ENCODE measurements at regions of chr2 and their contacts with region 1.

Region 1: DNA sequence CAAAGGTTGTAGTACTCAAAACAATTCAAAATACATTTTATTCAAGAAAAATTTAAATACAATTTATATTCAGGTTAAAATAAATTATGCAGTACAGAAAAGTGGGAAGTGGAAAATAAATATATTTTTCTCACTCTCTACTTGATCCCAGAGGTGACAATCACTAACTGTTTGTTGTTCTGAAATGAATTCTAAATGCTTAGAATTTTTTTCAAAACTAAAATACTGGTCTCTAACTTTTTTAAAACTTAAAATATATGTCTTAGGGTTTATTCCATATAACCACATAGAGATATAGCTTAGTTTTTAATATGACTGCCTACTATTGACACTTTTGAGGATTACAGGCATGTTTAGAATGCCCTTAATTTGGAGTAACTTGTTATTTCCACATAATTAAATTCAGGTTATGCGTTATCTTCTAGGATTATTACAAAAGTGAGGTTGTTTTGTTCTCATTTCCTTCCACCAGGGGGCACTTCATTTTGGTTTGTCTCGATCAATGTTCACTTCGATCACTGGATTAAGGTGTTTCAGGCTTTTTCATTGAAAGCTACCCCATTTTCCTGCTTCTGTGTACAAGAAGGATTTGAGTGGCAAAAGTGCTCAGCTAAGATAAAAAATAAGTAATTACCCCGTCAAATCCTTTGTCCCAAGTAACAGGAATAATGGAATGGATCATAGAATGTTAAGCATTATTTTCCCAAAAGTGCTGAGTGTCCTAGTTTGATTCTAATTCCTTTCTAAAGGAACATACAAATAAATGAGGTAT is 27.1 kb upstream of the TFPI start:
- DNase-seq: no peak
- ATAC-seq: peak; percentile 37 to 50
- H3K4me3 ChIP-seq: peak overlapping the region; percentile 59
- H3K27ac ChIP-seq: no peak overlapping the region
- H3K4me1 ChIP-seq: no peaks in the 10 kb centered on the region
- H3K27me3 ChIP-seq: no peaks in the 10 kb centered on the region

Region 2: GRCh38 chr2:187429989-187430388 is 151.3 kb before region 1 on chr2:
- intact Hi-C with region 1: no loop called
- DNase-seq: no peak
- ATAC-seq: peak in 1 of 2 donors; percentile 85
- H3K4me3 ChIP-seq: no peak overlapping the region
- H3K27ac ChIP-seq: no peak overlapping the region
- H3K4me1 ChIP-seq: no peaks in the 10 kb centered on the region
- H3K27me3 ChIP-seq: no peaks in the 10 kb centered on the region

Region 3: DNA sequence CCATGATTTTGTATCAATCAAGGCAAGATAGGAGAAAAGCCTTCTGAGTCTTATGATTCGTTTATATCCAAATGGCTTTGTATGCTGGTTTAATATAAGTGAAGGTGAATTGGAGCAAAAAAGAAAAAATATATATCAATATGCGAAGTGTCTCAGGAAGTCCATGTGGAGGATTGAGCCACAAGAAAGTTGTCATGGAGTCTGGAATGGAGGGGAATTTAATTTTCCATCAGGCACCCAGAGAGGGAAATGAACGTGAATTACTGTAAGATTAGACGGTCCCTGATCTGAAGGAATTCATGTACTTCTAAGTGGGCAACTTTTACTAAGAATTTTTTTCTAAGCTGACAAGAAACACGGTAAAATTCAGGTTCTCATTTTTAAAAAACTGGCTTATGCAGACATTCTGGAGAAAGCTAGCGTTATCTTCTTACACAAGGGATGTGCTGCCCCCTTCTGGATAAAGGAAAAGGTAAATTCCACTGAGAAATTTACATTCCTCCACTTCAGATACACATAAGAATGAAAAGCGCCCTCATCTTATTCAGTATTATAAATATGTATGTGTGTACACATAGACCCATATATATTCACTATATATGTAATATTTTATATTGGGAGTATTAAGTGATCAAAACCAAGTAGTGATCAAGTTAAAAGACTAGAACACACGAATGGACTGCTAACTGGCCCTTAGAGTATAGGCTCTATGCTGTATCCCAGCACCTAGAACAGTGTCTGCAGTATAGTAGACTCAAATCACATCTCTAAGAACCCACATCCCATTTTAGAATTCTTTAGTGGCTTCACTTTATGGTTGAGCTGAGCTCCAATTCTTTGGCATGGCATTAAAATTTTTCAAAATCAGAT is 261.9 kb after region 1 on chr2:
- intact Hi-C with region 1: loop called in 1 of 4 experiments (anchors 10 kb)
- DNase-seq: no peak
- ATAC-seq: peak in 1 of 2 donors; percentile 32
- H3K4me3 ChIP-seq: no peak overlapping the region
- H3K27ac ChIP-seq: no peak overlapping the region
- H3K4me1 ChIP-seq: no peaks in the 10 kb centered on the region
- H3K27me3 ChIP-seq: no peaks in the 10 kb centered on the region

Region 4: GRCh38 chr2:188506843-188507242 is 925.5 kb after region 1 on chr2:
- intact Hi-C with region 1: loop called in 1 of 4 experiments (anchors 10 kb)
- DNase-seq: no peak
- ATAC-seq: no peak
- H3K4me3 ChIP-seq: no peak overlapping the region
- H3K27ac ChIP-seq: no peak overlapping the region
- H3K4me1 ChIP-seq: no peaks in the 10 kb centered on the region
- H3K27me3 ChIP-seq: no peaks in the 10 kb centered on the region